Panc1 (cell line): ENCODE measurements at regions of chr1 and their contacts with region 1.

Region 1: GRCh38 chr1:154335025-154335714 is 9.8 kb downstream of the ATP8B2 start:
- DNase-seq: no peak
- ATAC-seq: peak; percentile 89
- H3K4me3 ChIP-seq: no peak overlapping the region
- H3K27ac ChIP-seq: no peak overlapping the region
- H3K4me1 ChIP-seq: no peaks in the 10 kb centered on the region
- H3K27me3 ChIP-seq: no peaks in the 10 kb centered on the region
- CTCF ChIP-seq: peak; percentile 95

Region 2: DNA sequence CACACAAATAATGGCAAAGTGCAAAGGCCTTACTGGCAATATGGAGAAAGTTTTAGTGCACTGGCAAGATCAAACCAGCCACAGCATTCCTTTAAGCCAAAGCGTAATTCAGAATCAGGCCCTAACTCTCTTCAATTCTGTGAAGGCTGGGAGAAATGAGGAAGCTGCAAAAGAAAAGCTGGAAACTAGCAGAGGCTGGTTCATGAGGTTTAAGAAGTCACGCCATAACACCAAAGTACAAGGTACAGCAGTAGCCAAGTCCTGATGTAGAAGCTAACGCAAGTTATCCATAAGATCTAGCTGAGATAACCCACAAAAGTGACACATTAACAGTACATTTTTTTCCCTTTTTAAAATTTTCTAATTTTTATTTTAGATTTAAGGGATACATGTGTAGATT is 502.9 kb before region 1 on chr1:
- CTCF ChIA-PET with region 1: no interaction called
- POLR2A ChIA-PET with region 1: no interaction called
- in situ Hi-C with region 1: no loop called
- intact Hi-C with region 1: no loop called
- DNase-seq: no peak
- ATAC-seq: no peak
- H3K4me3 ChIP-seq: no peak overlapping the region
- H3K27ac ChIP-seq: no peak overlapping the region
- H3K4me1 ChIP-seq: no peaks in the 10 kb centered on the region
- H3K27me3 ChIP-seq: no peaks in the 10 kb centered on the region
- CTCF ChIP-seq: no peak

Region 3: DNA sequence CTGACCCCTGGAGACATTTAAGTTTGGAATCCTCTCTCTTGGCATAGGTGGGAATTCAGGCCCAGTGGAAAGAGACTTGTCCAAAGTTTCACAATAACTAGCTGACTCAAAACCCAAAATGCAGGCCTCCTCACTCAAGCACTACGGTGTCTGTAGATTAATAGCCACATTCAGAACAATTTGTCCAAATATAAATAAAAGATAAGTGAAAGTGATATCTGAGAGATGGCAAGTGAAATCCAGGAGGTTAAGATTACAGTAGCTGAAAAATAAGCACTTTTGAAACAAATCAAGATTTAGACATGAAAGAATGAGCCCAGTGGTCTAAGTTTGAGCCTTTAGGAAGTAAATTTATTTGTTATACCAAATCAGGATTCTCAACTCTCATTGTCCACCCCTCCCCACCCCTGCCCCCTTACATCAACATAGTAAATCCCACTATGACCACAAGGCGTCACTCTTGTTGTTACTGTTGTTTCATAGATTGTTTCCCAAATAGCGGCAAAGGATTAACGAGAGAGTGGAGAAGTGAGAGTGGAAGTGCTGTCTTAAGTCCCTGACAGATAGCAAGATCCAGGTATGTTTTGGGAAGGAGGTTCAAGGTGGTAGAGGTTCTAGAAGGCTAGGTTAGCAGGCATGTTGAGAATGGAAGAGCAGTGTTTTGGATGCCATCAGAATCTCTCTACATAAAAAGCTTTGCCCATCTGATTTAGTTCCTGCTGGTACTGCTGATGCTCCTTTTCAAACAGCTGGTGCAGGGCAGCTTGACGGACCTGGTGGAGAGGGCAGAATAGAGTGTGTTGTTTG is 136.2 kb before region 1 on chr1:
- CTCF ChIA-PET with region 1: interaction called, 8 read pairs
- POLR2A ChIA-PET with region 1: no interaction called
- in situ Hi-C with region 1: no loop called
- intact Hi-C with region 1: loop called (anchors 10 kb)
- DNase-seq: no peak
- ATAC-seq: peak; percentile 87
- H3K4me3 ChIP-seq: peak overlapping the region in 1 of 2 experiments; percentile 13; a peak in 1 of 4 replicates
- H3K27ac ChIP-seq: no peak overlapping the region
- H3K4me1 ChIP-seq: 0 out of 2 replicates have a peak, but pooled peaks cover 2% of the 10 kb centered on the region
- H3K27me3 ChIP-seq: no peaks in the 10 kb centered on the region
- CTCF ChIP-seq: peak; percentile 80

Region 4: DNA sequence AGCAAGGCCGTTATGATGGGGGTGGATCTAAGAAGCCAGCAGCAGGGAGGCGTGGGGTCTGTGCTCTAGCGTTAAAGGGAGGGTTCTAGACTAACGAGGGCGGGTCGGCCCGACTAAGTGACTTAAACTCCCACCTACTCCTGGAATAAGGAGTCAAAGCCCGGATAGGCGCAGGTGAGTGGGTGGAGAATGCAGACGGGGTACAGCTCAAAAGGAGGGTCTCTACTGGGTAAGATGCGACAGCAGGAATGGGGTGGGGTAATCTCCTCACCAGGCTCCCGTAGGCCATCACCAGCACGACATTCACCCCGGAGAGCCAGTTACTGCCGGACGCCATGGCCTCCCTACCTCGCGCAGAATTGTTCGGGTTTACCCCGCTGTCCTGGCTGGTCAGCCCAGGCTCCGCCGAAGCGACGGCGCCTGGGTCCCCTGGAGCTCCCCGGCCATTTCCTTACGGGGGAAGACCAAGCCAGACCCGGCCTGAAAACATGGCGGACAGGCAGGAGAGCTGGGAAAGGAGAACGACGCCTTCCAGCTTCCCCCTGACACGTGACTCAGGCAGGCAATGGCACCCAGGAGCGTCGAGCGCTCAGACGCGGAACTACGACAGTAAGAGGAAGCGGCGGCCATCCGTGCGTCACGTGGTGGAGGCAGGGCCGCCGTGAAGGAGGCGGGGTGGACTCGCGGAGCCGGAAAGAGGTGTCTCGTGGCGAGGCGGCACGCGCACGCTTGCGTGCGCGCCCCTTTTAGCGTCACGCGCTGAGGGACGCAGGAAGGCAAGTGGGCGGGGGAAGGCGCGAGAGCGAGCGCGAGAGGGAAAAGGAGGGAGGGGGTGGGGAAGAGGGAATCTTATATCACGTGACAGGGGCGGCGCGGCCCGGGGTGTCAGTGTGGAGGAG is 114.8 kb before region 1 on chr1 and contains the start of gene UBAP2L:
- CTCF ChIA-PET with region 1: no interaction called
- POLR2A ChIA-PET with region 1: no interaction called
- in situ Hi-C with region 1: no loop called
- intact Hi-C with region 1: no loop called
- DNase-seq: peak; percentile 95
- ATAC-seq: peak; percentile 96
- H3K4me3 ChIP-seq: peak within 1 kb of the TSS; percentile 89 to 99
- H3K27ac ChIP-seq: peak within 1 kb of the TSS; percentile 99
- H3K4me1 ChIP-seq: peaks cover 29% of the 10 kb centered on the region
- H3K27me3 ChIP-seq: no peaks in the 10 kb centered on the region
- CTCF ChIP-seq: no peak
- total RNA-seq, gene UBAP2L: 227 TPM

Region 5: DNA sequence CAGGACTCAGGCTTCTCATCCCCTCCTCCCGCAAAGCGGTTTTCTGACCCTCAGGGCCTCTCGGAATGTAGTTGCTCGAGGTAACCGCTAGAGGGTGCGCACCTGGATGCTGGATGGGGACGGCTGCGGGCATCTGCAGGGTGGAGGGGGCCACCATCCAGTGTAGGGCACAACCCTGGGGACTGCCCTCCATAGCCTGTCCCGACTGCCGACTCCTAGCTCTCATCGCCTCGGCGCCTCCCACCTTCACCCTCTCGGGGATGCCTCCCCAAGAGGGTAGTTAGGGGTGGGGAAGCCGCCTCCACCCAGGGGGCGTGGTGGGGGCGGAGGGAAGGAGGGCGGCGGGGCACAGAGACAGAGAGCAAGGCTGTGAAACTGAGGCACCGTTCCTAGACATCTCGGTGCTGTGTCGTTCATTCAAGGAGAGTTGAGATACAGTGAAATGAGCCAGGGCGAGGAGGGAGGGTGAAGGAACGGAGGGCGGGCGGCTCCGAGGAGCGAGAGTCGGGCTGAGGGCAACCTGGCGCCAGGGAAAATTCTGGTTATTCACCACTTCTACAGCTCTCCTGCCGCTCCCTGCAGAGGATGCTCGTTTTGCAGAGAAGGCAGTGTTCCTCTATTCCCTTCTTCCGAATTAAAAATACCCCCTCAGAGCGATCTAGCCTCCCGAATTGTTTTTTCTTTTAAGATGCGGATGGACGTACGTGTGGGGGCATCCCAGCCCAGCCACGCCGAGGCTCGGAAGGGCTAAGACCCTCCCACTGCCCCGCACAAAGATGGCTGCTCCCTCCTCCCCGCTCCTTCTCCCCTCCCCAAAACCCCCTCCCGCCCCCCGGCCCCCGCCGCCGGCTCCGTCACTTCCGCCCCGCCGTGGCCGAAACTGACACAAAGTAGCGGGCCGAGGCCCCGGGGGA is 10.2 kb before region 1 on chr1 and contains the start of gene ATP8B2:
- CTCF ChIA-PET with region 1: interaction called, 20 read pairs
- POLR2A ChIA-PET with region 1: no interaction called
- in situ Hi-C with region 1: no loop called
- intact Hi-C with region 1: no loop called
- DNase-seq: peak; percentile 69
- ATAC-seq: peak; percentile 81
- H3K4me3 ChIP-seq: peak within 1 kb of the TSS; percentile 59 to 83
- H3K27ac ChIP-seq: peak within 1 kb of the TSS; percentile 69
- H3K4me1 ChIP-seq: peaks cover 16% of the 10 kb centered on the region
- H3K27me3 ChIP-seq: no peaks in the 10 kb centered on the region
- CTCF ChIP-seq: peak; percentile 98
- total RNA-seq, gene ATP8B2: 14.7 TPM

Region 6: GRCh38 chr1:154558575-154559465 is 223.7 kb after region 1 on chr1 and contains the start of gene UBE2Q1:
- CTCF ChIA-PET with region 1: no interaction called
- POLR2A ChIA-PET with region 1: no interaction called
- in situ Hi-C with region 1: no loop called
- intact Hi-C with region 1: no loop called
- DNase-seq: peak; percentile 91
- ATAC-seq: peak; percentile 96
- H3K4me3 ChIP-seq: peak within 1 kb of the TSS; percentile 81 to 98
- H3K27ac ChIP-seq: peak within 1 kb of the TSS; percentile 91
- H3K4me1 ChIP-seq: peaks cover 14% of the 10 kb centered on the region
- H3K27me3 ChIP-seq: no peaks in the 10 kb centered on the region
- CTCF ChIP-seq: no peak
- total RNA-seq, gene UBE2Q1: 96.0 TPM